ENCODE measurements at regions of chr1 and their contacts with region 1.

Region 1: DNA sequence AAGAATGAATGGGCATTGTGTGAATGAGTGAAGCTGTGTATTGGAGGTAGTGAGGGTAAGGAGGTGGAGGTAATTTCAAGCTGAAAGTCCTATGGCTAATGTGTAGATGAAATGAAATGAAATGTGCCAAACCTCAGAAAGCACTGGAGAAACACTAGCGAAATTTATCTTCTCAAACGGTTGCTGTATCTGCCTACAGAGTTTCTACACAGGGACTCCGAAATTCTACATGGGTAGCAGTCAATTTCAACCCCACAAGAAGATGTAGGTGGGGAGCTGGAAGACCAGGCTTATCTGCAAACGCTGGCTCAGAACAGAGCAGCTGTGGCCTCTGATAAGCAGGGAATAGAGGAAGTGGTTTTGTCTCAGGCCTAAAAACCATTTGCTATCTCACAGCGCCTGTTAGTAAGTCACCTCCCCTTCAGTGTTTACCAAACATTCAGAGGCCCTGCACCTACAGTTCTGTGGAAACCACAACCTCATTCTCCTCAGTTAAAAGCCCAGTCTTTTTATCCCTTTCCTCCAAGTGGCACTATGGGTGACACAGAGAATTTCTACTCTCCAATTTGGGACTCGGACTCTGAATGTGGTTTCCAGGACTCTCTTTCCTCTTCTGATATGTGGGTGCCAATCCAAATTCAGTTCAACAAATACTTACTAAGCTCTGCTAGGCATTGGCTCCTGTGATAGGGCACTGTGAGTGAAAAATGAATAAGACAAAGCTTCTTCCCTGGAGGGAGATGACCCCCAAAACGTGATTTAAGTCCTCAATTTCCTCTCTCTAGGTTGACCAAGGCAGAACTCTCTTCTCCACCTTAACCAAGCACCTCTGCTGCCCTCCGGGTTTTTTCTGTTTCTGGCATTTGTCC is 17.2 kb upstream of the SLAMF6 start:
- DNase-seq: peak in 8 of 9 donors; percentile 43 to 69 (median 54)
- ATAC-seq: peak; percentile 96
- H3K4me3 ChIP-seq: peak overlapping the region; percentile 23
- H3K4me3 Mint-ChIP-seq: peak overlapping the region; percentile 40 to 79 (median 64)
- H3K27ac ChIP-seq: peak overlapping the region; percentile 65
- H3K27ac Mint-ChIP-seq: peak overlapping the region; percentile 64 to 97 (median 91)
- H3K4me1 ChIP-seq: peaks cover 45 to 54% of the 10 kb centered on the region in 2 donors
- H3K4me1 Mint-ChIP-seq: peaks cover 46 to 63% (median 55%) of the 10 kb centered on the region in 7 donors
- H3K27me3 ChIP-seq: no peaks in the 10 kb centered on the region
- H3K27me3 Mint-ChIP-seq: no peaks in the 10 kb centered on the region

Region 2: DNA sequence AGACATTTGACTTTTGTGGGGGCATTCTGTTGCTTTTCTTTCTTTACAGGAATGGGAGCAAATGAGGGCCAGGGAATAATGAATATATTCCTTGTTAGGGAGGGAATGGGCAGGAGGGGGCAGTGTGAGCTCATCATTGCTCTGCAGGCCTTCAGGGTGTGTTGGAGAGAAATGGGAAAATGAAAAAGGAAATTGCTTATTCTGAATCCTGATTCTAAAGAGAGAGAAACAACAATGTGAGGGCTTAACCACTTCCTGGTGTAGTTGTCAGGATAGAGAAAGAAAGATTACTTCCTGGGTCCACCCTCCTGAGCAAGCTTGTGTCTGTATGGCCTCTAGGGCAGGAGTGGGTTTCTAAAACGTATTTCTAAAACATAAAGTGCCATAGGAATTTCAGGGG is 111.6 kb before region 1 on chr1:
- CTCF ChIA-PET with region 1: interaction called, 14 read pairs
- POLR2A ChIA-PET with region 1: interaction called, 4 read pairs
- intact Hi-C with region 1: loop called (anchors 1 kb)
- DNase-seq: peak in 6 of 9 donors; percentile 35 to 61 (median 47)
- ATAC-seq: peak; percentile 54
- H3K4me3 ChIP-seq: no peak overlapping the region
- H3K4me3 Mint-ChIP-seq: peak overlapping the region; percentile 3 to 74 (median 62)
- H3K27ac ChIP-seq: peak overlapping the region; percentile 68
- H3K27ac Mint-ChIP-seq: peak overlapping the region; percentile 84 to 99 (median 91)
- H3K4me1 ChIP-seq: peaks cover 55 to 56% of the 10 kb centered on the region in 2 donors
- H3K4me1 Mint-ChIP-seq: peaks cover 32 to 77% (median 68%) of the 10 kb centered on the region in 7 donors
- H3K27me3 ChIP-seq: no peaks in the 10 kb centered on the region
- H3K27me3 Mint-ChIP-seq: no peaks in the 10 kb centered on the region

Region 3: DNA sequence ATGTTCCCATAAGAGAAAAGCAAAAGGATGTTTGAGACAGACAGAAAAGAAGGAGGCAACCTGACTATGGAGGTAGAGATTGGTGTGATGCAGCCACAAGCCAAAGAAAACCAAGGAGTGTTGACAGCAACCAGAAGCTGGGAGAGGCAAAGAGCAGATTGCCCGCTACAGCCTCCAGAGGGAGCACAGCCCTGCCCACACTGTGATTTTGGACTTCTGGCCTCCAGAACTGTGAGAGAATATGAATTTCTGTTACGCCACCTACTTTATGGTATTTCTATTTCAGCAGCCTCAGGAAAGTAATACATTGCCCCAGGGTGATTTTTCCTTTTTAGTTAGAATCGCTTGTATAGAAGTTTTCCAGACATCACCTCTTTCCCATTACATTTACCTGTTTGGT is 45.6 kb before region 1 on chr1:
- CTCF ChIA-PET with region 1: interaction called, 3 read pairs
- POLR2A ChIA-PET with region 1: interaction called, 5 read pairs
- intact Hi-C with region 1: loop called in 1 of 2 experiments (anchors 5 kb)
- DNase-seq: no peak
- ATAC-seq: no peak
- H3K4me3 ChIP-seq: no peak overlapping the region
- H3K4me3 Mint-ChIP-seq: no peak overlapping the region
- H3K27ac ChIP-seq: no peak overlapping the region
- H3K27ac Mint-ChIP-seq: peak overlapping the region in 5 of 9 donors; percentile 14 to 66 (median 32)
- H3K4me1 ChIP-seq: peaks cover 0 to 3% of the 10 kb centered on the region in 2 donors
- H3K4me1 Mint-ChIP-seq: peaks cover 4 to 37% (median 21%) of the 10 kb centered on the region in 7 donors
- H3K27me3 ChIP-seq: no peaks in the 10 kb centered on the region
- H3K27me3 Mint-ChIP-seq: no peaks in the 10 kb centered on the region

Region 4: DNA sequence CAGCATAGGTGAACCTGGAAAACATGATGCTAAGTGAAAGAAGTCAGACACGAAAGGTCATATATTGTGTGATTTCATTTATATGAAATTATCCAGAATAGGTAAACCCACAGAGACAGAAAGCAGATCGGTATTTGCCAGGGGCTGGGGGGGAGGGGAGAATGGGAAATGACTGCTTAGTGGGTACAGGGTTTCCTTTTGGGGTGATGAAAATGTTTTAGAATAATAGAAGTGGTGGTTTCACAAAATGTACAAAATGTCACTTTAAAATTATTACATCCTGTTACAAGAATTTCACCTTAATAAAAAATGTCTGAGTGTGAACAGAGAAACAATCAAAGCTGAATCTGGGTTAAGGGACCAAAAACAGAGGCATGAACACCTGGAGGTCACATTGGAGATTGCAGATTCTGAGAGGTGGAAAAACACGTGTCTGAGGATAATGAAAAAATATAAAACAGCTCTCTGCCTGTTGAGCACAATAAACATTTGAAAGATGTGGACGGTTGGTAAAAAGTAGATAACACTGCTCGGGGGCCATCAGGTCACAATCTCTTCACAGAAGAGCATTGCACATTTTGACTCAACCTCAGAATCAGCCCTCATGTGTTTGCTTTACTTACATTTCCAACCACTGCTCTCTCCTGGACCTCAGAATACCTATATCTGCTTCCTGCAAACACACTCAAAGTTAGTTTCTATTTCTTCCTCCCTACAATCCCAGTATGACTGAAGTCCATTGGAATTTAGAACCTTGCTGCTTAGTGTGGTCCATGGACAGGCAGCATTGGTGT is 20.4 kb before region 1 on chr1:
- CTCF ChIA-PET with region 1: interaction called, 12 read pairs
- POLR2A ChIA-PET with region 1: interaction called, 15 read pairs
- intact Hi-C with region 1: loop called (anchors 1 kb)
- DNase-seq: peak in 6 of 9 donors; percentile 33 to 60 (median 46)
- ATAC-seq: peak; percentile 72
- H3K4me3 ChIP-seq: peak overlapping the region; percentile 51
- H3K4me3 Mint-ChIP-seq: peak overlapping the region; percentile 87 to 98 (median 94)
- H3K27ac ChIP-seq: peak overlapping the region; percentile 84
- H3K27ac Mint-ChIP-seq: peak overlapping the region; percentile 88 to 99 (median 92)
- H3K4me1 ChIP-seq: peaks cover 34 to 53% of the 10 kb centered on the region in 2 donors
- H3K4me1 Mint-ChIP-seq: peaks cover 56 to 98% (median 93%) of the 10 kb centered on the region in 7 donors
- H3K27me3 ChIP-seq: no peaks in the 10 kb centered on the region
- H3K27me3 Mint-ChIP-seq: no peaks in the 10 kb centered on the region

Region 5: DNA sequence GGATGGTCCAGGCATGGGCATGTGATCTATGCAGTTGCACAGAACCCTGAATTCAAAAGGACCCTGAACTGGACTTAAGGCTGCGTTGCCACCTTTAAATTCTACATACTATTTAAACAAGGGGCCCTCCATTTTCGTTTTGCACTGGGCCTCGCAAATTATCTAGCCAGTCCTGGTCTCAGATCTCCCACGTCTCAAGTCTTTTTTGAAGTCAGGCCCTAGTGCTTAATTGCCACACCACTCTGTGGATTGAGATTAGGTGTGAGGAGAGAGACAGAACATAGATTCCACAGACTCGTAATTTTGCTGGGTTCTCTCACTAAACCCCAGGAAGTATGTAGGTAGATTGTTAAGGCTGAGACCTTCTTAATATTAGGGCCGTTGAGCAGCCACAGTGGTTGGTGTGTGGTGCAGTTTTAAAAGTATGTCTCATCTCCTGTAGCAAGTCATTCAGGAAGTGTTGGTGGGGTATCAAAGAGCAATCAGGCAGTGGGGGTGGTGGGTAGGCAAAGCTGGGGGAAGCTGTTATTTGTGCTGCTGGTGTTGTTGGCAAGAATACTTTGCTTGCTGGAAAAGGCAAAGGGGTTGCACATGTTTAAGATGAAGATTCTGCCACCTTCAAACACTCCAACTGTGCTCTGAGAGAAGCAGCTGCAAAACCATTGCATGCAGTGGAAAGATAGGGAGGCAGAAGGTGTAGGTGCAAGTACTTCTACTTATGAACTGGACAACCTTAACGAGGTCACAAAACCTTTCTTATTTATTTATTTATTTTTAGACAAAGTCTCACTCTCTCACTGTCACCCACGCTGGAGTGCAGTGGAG is 27.8 kb after region 1 on chr1:
- CTCF ChIA-PET with region 1: interaction called, 4 read pairs
- POLR2A ChIA-PET with region 1: interaction called, 5 read pairs
- intact Hi-C with region 1: loop called in 1 of 2 experiments (anchors 1 kb)
- DNase-seq: peak in 8 of 9 donors; percentile 49 to 70 (median 59)
- ATAC-seq: peak; percentile 92
- H3K4me3 ChIP-seq: peak overlapping the region; percentile 11
- H3K4me3 Mint-ChIP-seq: peak overlapping the region; percentile 6 to 90 (median 73)
- H3K27ac ChIP-seq: peak overlapping the region; percentile 67
- H3K27ac Mint-ChIP-seq: peak overlapping the region; percentile 86 to 98 (median 89)
- H3K4me1 ChIP-seq: peaks cover 75 to 96% of the 10 kb centered on the region in 2 donors
- H3K4me1 Mint-ChIP-seq: peaks cover 63 to 95% (median 83%) of the 10 kb centered on the region in 7 donors
- H3K27me3 ChIP-seq: no peaks in the 10 kb centered on the region
- H3K27me3 Mint-ChIP-seq: no peaks in the 10 kb centered on the region

Measured in naive thymus-derived CD4-positive, alpha-beta T cell (primary cell).